ENCODE measurements at regions of chr22 and their contacts with region 1.

Region 1: DNA sequence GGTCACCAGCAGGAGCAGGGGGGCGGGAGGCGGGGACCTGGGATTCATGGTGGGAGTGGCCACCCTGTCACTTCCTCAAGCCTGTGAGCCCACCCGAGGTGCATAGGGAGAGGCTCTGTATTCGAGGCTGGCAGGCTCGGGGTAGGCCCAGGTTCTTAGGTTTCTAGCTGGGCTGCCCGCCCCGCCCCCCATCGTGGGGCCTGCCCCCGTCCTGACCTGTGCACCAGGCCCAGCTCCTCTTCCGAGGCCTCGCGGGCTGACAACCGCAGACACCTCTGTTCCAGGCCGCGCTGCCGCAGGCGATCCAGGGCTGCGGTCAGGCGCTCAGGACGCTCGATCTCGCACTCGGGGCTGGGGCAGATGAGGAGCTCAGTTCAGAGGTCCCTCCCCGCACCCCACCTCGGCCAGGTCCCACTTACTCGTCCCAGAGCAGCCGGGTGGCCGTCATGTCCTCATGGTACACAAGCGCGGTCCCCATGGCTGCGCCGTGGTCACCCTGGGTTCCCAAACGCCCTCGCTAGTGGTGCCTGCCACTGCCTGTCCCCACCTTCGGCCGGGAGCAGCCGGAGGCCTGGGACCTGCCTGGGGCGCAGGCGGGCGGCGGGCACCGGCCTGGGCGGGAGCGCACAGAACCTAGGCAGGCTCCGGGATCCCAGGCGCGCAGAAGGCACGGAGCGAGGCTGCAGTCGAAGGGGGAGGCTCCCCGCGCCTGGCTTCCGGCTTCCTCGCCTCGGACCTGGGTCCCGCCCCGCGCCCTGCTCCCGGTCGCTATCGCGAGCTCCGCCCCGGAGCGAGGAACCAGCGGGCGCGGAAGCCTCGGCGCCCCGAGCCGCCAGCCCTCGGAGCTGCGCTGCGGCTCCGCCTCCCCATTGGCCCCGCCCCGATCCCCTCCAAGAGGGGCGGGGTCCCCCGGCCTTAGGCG is at the start of gene HDAC10:
- DNase-seq: peak; percentile 91
- H3K4me3 ChIP-seq: peak within 1 kb of the TSS; percentile 46 to 69 (median 62)
- H3K27ac ChIP-seq: peak within 1 kb of the TSS; percentile 67 to 86 (median 76)
- H3K4me1 ChIP-seq: peaks cover 17 to 35% (median 29%) of the 10 kb centered on the region in 4 donors
- H3K27me3 ChIP-seq: no peaks in the 10 kb centered on the region
- CTCF ChIP-seq: no peak
- EP300 ChIP-seq: no peak
- POLR2A ChIP-seq: peak; percentile 58
- total RNA-seq, gene HDAC10: 66.8 to 618 (median 142) TPM

Region 2: DNA sequence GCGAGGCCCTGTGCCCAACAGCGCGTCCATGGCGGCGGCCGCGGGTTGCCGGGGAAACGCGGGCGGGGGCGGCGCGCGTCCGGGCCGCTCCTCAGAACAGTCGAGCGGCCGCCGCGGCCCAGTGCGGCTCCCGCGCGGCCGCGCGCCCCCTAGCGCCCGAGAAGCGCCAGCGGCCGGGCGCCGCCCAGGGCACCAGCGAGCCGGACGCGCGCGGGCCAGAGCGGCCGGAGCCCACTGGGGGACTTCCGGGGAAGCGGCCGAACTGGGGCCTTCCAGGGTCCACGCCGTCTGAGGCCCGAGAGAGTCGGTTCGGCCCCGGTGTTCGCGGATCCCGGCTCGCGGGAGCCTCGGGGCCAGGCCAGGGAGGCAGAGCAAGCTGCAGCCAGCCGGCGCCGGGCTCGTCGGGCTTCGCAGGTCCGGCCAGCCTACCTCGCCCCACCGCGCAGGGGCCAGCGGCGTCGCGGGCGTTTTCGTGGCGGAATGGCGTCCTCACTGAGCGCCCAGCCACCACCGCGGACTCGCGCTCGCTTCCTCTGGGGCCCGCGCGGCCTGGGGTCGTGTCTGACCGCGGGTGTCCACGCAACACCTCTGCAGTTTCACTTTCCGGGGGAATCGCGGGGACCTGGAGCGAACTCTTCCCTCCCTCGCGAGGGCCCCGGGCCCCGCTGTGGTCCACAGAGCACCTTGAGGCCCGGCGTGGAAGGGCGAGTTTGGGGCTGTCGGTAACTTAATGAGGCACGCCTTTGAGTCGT is 76.3 kb after region 1 on chr22 and contains the start of gene DENND6B:
- in situ Hi-C with region 1: loop called in 2 of 4 experiments (anchors 10 kb)
- intact Hi-C with region 1: no loop called
- DNase-seq: peak; percentile 83
- H3K4me3 ChIP-seq: peak within 1 kb of the TSS; percentile 50 to 82 (median 76)
- H3K27ac ChIP-seq: peak within 1 kb of the TSS; percentile 93 to 94 (median 94)
- H3K4me1 ChIP-seq: peaks cover 11 to 24% (median 13%) of the 10 kb centered on the region in 4 donors
- H3K27me3 ChIP-seq: no peaks in the 10 kb centered on the region
- CTCF ChIP-seq: peak; percentile 38 to 64 (median 43)
- EP300 ChIP-seq: no peak
- POLR2A ChIP-seq: peak; percentile 67
- total RNA-seq, gene DENND6B: 3.2 to 22.7 (median 8.3) TPM

Region 3: DNA sequence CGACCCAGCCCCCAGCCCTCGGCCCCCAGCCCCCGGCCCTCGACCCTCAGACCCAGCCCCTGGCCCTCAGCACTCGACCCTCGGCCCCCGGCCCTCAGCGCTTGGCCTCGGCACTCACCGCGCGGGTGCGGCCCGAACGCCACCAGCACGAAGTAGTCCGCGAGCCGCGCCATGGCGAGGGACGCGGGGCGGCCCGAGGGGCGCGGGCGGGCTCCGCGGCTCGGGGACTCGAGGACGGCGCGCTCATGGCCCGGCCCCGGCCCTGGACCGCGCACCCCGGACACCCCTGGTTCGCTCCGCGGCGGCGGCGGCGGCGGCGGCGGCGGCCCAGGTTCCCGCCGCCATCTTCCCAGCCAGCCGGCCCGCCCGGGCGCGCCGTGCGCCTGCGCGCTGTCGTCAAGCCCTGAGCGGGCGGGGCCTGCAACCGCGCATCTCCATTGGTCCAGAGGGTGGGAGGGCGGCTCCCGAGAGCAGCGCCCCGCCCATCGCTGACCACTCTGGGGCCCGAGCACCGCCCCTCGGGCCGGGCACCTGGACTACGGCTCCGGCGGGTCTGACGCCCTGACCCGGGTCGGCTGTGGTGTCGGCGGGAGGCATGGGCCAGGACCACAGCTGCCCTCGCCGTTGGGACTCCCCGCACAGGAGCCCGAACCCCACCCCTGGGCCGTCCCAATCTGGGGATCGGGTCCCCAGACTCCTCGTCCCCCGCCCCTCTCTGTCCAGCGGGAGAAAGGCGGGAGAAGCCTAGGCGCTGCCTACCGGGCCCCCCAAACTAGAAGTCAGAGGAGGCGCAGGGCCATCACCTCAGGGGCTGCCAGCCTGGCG is 224.1 kb after region 1 on chr22 and contains the start of gene SBF1:
- in situ Hi-C with region 1: no loop called
- intact Hi-C with region 1: loop called (anchors 10 kb)
- DNase-seq: peak; percentile 94
- H3K4me3 ChIP-seq: peak within 1 kb of the TSS; percentile 67 to 92 (median 85)
- H3K27ac ChIP-seq: peak within 1 kb of the TSS; percentile 88 to 92 (median 91)
- H3K4me1 ChIP-seq: peaks cover 45 to 50% (median 46%) of the 10 kb centered on the region in 4 donors
- H3K27me3 ChIP-seq: peaks cover 11% of the 10 kb centered on the region
- CTCF ChIP-seq: no peak
- EP300 ChIP-seq: no peak
- POLR2A ChIP-seq: peak; percentile 50
- total RNA-seq, gene SBF1: 59.9 to 241 (median 108) TPM